Endothelial cell of umbilical vein (primary cell): ENCODE measurements at regions of chr1 and their contacts with region 1.

Region 1: GRCh38 chr1:227234998-227235405 is 83.3 kb downstream of the CDC42BPA start:
- DNase-seq: peak; percentile 79
- H3K4me3 ChIP-seq: no peak overlapping the region
- H3K27ac ChIP-seq: no peak overlapping the region
- H3K4me1 ChIP-seq: peaks cover 11% of the 10 kb centered on the region
- H3K27me3 ChIP-seq: no peaks in the 10 kb centered on the region
- CTCF ChIP-seq: peak; percentile 55 to 60
- POLR2A ChIP-seq: no peak

Region 2: GRCh38 chr1:226915672-226915995 is 319.4 kb before region 1 on chr1:
- CTCF ChIA-PET with region 1: no interaction called
- POLR2A ChIA-PET with region 1: no interaction called
- dilution Hi-C with region 1: no loop called
- intact Hi-C with region 1: no loop called
- DNase-seq: no peak
- H3K4me3 ChIP-seq: no peak overlapping the region
- H3K27ac ChIP-seq: no peak overlapping the region
- H3K4me1 ChIP-seq: no peaks in the 10 kb centered on the region
- H3K27me3 ChIP-seq: no peaks in the 10 kb centered on the region
- CTCF ChIP-seq: no peak
- POLR2A ChIP-seq: no peak

Region 3: GRCh38 chr1:227299241-227299627 is 64.2 kb after region 1 on chr1:
- CTCF ChIA-PET with region 1: no interaction called
- POLR2A ChIA-PET with region 1: no interaction called
- dilution Hi-C with region 1: no loop called
- intact Hi-C with region 1: loop called (anchors 5 kb)
- DNase-seq: peak; percentile 75
- H3K4me3 ChIP-seq: peak overlapping the region in 1 of 3 experiments; percentile 61
- H3K27ac ChIP-seq: peak overlapping the region; percentile 83
- H3K4me1 ChIP-seq: peaks cover 20% of the 10 kb centered on the region
- H3K27me3 ChIP-seq: no peaks in the 10 kb centered on the region
- CTCF ChIP-seq: no peak
- POLR2A ChIP-seq: no peak

Region 4: GRCh38 chr1:227351443-227351842 is 116.4 kb after region 1 on chr1:
- CTCF ChIA-PET with region 1: interaction called, 3 read pairs
- POLR2A ChIA-PET with region 1: no interaction called
- dilution Hi-C with region 1: no loop called
- intact Hi-C with region 1: loop called (anchors 1 kb)
- DNase-seq: peak; percentile 96
- H3K4me3 ChIP-seq: no peak overlapping the region
- H3K27ac ChIP-seq: peak overlapping the region; percentile 53
- H3K4me1 ChIP-seq: peaks cover 34% of the 10 kb centered on the region
- H3K27me3 ChIP-seq: no peaks in the 10 kb centered on the region
- CTCF ChIP-seq: no peak
- POLR2A ChIP-seq: no peak